ENCODE measurements at regions of chr22 and their contacts with region 1.

Region 1: DNA sequence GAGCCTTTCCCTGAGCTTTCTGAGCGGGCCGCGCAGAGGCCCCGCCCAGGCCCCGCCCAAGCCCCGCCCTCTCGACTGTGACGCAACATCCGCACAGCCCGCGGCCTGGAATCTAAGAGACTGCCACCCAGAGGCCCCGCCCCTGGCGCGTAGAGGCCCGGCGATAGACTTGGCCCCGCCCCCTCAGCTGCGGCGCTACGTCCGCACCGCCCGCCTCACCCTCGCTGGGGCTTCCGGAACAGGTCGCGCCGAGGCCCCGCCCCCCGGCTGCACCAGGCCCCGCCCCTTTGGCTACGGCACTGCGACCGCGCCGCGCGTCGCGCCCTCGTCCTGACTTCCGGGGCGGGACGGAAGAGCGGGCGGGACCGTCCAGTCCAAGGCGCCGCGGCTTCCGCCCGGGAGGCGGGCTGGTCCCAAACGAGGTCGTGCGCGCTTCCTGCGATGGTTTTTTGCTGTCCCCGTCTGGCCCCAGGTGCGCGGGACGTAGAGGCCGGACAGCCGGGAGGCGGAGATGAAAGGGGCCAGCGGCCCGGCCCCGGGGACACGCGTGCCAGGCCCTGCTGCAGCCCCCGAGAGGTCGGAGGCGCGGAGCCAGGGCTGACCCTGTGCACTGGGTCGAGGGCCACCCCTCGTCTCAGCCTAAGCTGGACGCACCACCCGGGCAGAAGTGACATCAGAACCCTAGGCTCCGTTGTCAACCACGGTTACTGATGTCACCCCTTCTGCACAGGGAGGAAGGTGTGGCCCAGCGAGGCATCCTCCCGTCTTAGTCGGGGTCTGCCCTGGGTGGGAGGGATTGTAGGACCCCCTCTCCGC is 59.0 kb upstream of the WNT7B start:
- DNase-seq: peak; percentile 99 to 100 (median 100)

Region 2: GRCh38 chr22:46013460-46014416 is 22.2 kb before region 1 on chr22:
- intact Hi-C with region 1: loop called (anchors 2 kb)
- DNase-seq: peak; percentile 60 to 97 (median 83)

Measured in posterior cingulate gyrus (tissue), 11 donors.